Activated naive CD4-positive, alpha-beta T cell treated with anti-CD3 and anti-CD28 coated beads, Interleukin-2, amount 10 ng/mL, durations not matched to agents 7 days and 5 days (primary cell): ENCODE measurements at regions of chr1 and their contacts with region 1.

Region 1: GRCh38 chr1:206635080-206635977 is at the start of gene DYRK3:
- DNase-seq: peak; percentile 96
- H3K4me3 Mint-ChIP-seq: peak within 1 kb of the TSS; percentile 77
- H3K27ac Mint-ChIP-seq: peak within 1 kb of the TSS; percentile 85
- H3K4me1 Mint-ChIP-seq: peaks cover 26% of the 10 kb centered on the region
- H3K27me3 Mint-ChIP-seq: peaks cover 38% of the 10 kb centered on the region

Region 2: DNA sequence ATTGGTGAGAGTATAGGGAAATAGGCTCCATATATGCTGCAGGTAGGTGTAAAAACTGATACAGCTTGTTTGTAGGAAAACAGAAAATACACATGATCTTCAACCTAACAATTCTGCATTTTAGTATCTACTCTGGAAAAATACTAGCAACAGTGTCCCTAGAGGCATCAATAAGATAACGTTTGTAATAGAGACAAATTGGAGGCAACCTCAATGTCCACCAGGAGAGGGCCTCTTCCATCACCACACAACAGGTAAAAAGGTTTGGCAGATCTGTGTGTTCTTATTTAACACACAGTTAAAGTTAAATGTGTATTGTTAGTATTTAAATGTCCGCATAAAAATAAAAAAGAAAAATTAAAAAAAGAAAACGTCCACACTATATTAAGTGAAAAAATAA is 28.5 kb before region 1 on chr1:
- CTCF ChIA-PET with region 1: interaction called, 25 read pairs
- DNase-seq: peak; percentile 36
- H3K4me3 Mint-ChIP-seq: no peak overlapping the region
- H3K27ac Mint-ChIP-seq: no peak overlapping the region
- H3K4me1 Mint-ChIP-seq: peaks cover 28% of the 10 kb centered on the region
- H3K27me3 Mint-ChIP-seq: no peaks in the 10 kb centered on the region

Region 3: DNA sequence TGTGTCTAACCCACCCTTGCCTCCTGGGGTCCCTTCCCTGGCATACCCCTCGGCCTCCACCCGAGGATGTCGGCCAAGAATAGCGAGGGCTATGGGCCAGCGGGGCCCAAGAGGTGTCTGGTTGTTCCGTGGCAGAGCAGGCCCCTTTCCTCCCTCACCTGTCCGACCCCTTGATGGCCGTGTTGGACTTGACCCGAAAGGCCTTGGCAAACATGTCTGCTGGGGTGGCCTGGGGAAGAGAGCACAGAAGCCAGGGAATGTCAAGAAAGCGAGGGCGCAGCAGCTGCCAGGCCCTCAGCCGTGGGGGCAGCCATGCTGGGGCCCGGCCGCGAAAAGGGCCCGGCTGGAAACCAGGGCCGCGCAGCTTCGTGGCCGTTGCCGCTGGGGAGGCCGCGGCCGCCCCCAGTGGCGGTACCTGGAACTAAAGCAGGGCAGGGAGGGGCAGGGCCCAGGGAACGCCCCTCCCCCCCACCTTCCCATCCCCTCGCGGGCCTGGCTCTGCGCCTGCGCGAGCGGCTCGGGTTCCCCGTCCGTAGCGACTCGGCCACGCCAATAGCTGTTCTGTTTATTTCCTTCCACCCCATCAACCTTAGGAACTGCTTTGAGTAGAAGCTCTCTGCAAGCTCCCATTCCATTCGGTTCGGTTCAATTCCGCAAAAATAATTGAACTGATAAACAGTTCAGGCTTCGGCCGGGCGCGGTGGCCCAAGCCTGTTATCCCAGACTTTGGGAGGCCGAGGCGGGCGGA is 23.0 kb before region 1 on chr1 and contains the start of gene EIF2D:
- CTCF ChIA-PET with region 1: interaction called, 25 read pairs
- DNase-seq: peak; percentile 94
- H3K4me3 Mint-ChIP-seq: peak within 1 kb of the TSS; percentile 81
- H3K27ac Mint-ChIP-seq: peak within 1 kb of the TSS; percentile 86
- H3K4me1 Mint-ChIP-seq: peaks cover 30% of the 10 kb centered on the region
- H3K27me3 Mint-ChIP-seq: peaks cover 18% of the 10 kb centered on the region

Region 4: GRCh38 chr1:206651958-206652890 is 16.9 kb after region 1 on chr1:
- CTCF ChIA-PET with region 1: interaction called, 29 read pairs
- DNase-seq: no peak
- H3K4me3 Mint-ChIP-seq: no peak overlapping the region
- H3K27ac Mint-ChIP-seq: no peak overlapping the region
- H3K4me1 Mint-ChIP-seq: no peaks in the 10 kb centered on the region
- H3K27me3 Mint-ChIP-seq: peaks cover 14% of the 10 kb centered on the region

Region 5: GRCh38 chr1:206658264-206658980 is 23.1 kb after region 1 on chr1:
- CTCF ChIA-PET with region 1: interaction called, 188 read pairs
- DNase-seq: peak; percentile 70
- H3K4me3 Mint-ChIP-seq: no peak overlapping the region
- H3K27ac Mint-ChIP-seq: no peak overlapping the region
- H3K4me1 Mint-ChIP-seq: peaks cover 12% of the 10 kb centered on the region
- H3K27me3 Mint-ChIP-seq: peaks cover 68% of the 10 kb centered on the region